ENCODE measurements at regions of chr14 and their contacts with region 1.

Region 1: DNA sequence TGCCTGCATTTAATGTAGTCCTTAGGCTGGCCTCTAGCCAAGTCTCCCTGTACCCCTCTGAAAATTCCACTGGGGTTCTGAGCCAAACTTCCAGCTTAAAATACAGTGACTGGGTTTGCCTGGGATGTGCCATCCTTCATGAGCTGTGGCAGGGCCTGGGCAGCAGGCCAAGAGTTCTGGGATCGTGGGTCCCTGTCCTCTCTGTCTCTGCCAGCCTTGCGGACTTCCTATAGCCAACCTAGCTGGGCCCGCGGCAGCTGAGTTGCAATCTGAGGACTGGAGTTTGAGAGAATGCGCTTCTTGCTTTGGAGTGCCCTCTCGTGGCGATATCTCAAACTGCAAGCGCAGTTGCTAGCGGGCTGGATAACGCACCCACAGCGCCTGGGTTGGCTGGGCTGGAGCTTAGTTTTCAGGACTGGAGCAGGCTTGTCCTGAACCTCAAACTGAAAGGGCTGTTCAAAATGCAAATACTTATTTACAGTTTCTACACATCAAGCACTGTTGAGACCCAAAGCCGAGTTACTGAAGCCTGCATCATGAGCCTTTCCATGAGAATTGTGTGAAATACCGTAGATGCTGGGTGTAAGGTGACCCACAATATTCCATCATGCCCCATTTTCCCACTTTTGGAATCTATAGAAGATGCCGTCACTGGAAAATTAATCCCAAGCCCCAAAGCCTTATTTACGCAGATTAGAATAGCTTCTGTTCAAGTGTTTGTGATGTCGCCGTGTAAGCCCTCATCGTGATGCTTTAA is 7.3 kb upstream of the IFI27L2 start:
- DNase-seq: no peak
- H3K4me3 ChIP-seq: no peak overlapping the region
- CTCF ChIP-seq: peak; percentile 96

Region 2: GRCh38 chr14:94026173-94026888 is 110.4 kb before region 1 on chr14 and contains the start of gene OTUB2:
- CTCF ChIA-PET with region 1: interaction called, 348 read pairs
- POLR2A ChIA-PET with region 1: no interaction called
- DNase-seq: peak; percentile 91
- H3K4me3 ChIP-seq: peak within 1 kb of the TSS; percentile 71
- CTCF ChIP-seq: no peak

Region 3: GRCh38 chr14:94051115-94051514 is 85.6 kb before region 1 on chr14:
- CTCF ChIA-PET with region 1: interaction called, 143 read pairs
- POLR2A ChIA-PET with region 1: interaction called, 3 read pairs
- DNase-seq: no peak
- H3K4me3 ChIP-seq: no peak overlapping the region
- CTCF ChIP-seq: peak; percentile 56

Region 4: GRCh38 chr14:94120667-94121340 is 15.9 kb before region 1 on chr14:
- CTCF ChIA-PET with region 1: interaction called, 46 read pairs
- POLR2A ChIA-PET with region 1: no interaction called
- DNase-seq: peak; percentile 76
- H3K4me3 ChIP-seq: no peak overlapping the region
- CTCF ChIP-seq: no peak

Region 5: GRCh38 chr14:94173885-94174603 is 37.3 kb after region 1 on chr14 and contains the start of gene PPP4R4:
- CTCF ChIA-PET with region 1: interaction called, 39 read pairs
- POLR2A ChIA-PET with region 1: no interaction called
- DNase-seq: no peak
- H3K4me3 ChIP-seq: peak within 1 kb of the TSS; percentile 67
- CTCF ChIP-seq: no peak